ENCODE measurements at regions of chr9 and their contacts with region 1.

Region 1: GRCh38 chr9:94726495-94727191 is at the start of gene AOPEP:
- DNase-seq: peak; percentile 98 to 100 (median 99)
- ATAC-seq: peak; percentile 95
- H3K4me3 ChIP-seq: peak within 1 kb of the TSS; percentile 88 to 92
- H3K4me3 Mint-ChIP-seq: peak within 1 kb of the TSS; percentile 99
- H3K27ac ChIP-seq: peak within 1 kb of the TSS; percentile 95 to 96
- H3K27ac Mint-ChIP-seq: peak within 1 kb of the TSS; percentile 98
- H3K4me1 ChIP-seq: peaks cover 6% of the 10 kb centered on the region
- H3K4me1 Mint-ChIP-seq: peaks cover 12% of the 10 kb centered on the region
- H3K27me3 ChIP-seq: no peaks in the 10 kb centered on the region
- H3K27me3 Mint-ChIP-seq: no peaks in the 10 kb centered on the region
- CTCF ChIP-seq: no peak
- total RNA-seq, gene AOPEP: 4.5 to 5.2 TPM

Region 2: DNA sequence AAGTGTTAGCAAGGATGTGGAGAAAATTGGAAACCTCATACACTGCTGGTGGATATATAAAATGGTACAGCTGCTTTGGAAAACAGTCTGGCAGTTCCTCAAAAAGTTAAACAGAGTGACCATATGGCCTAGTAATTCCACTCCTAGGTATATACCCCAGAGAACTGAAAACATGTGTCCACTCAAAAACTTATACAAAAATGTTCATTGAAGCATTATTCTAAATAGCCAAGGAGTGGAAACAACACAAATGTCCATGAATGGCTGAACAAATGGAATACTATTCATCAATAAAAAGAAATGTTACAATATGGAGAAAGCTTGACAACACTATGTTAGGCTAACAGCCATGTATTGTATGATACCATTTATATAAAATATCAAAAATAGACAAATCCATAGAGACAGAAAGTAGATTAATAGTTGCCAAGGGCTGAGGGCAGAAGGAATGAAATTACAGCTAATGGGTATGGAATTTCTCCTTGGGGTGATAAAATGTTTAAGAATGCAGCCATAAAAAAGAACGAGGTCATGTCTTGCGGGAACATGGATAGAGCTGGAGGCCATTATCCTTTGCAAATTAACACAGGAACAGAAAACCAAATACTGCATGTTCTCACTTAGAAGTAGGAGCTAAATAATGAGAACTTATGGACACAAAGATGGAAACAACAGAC is 53.7 kb before region 1 on chr9:
- CTCF ChIA-PET with region 1: interaction called, 3 read pairs
- POLR2A ChIA-PET with region 1: interaction called, 3 read pairs
- intact Hi-C with region 1: loop called in 1 of 2 experiments (anchors 1 kb)
- DNase-seq: no peak
- ATAC-seq: no peak
- H3K4me3 ChIP-seq: no peak overlapping the region
- H3K4me3 Mint-ChIP-seq: no peak overlapping the region
- H3K27ac ChIP-seq: no peak overlapping the region
- H3K27ac Mint-ChIP-seq: no peak overlapping the region
- H3K4me1 ChIP-seq: no peaks in the 10 kb centered on the region
- H3K4me1 Mint-ChIP-seq: peaks cover 2% of the 10 kb centered on the region
- H3K27me3 ChIP-seq: no peaks in the 10 kb centered on the region
- H3K27me3 Mint-ChIP-seq: peaks cover 5% of the 10 kb centered on the region
- CTCF ChIP-seq: no peak

Region 3: GRCh38 chr9:94870793-94871558 is 144.3 kb after region 1 on chr9:
- CTCF ChIA-PET with region 1: no interaction called
- POLR2A ChIA-PET with region 1: no interaction called
- intact Hi-C with region 1: loop called in 1 of 2 experiments (anchors 2 kb)
- DNase-seq: peak in 7 of 9 experiments; percentile 11 to 93 (median 47)
- ATAC-seq: peak; percentile 88
- H3K4me3 ChIP-seq: peak overlapping the region in 1 of 2 experiments; percentile 7
- H3K4me3 Mint-ChIP-seq: peak overlapping the region; percentile 59
- H3K27ac ChIP-seq: peak overlapping the region; percentile 26 to 55
- H3K27ac Mint-ChIP-seq: peak overlapping the region; percentile 94
- H3K4me1 ChIP-seq: peaks cover 26% of the 10 kb centered on the region
- H3K4me1 Mint-ChIP-seq: peaks cover 31% of the 10 kb centered on the region
- H3K27me3 ChIP-seq: no peaks in the 10 kb centered on the region
- H3K27me3 Mint-ChIP-seq: no peaks in the 10 kb centered on the region
- CTCF ChIP-seq: no peak

Region 4: DNA sequence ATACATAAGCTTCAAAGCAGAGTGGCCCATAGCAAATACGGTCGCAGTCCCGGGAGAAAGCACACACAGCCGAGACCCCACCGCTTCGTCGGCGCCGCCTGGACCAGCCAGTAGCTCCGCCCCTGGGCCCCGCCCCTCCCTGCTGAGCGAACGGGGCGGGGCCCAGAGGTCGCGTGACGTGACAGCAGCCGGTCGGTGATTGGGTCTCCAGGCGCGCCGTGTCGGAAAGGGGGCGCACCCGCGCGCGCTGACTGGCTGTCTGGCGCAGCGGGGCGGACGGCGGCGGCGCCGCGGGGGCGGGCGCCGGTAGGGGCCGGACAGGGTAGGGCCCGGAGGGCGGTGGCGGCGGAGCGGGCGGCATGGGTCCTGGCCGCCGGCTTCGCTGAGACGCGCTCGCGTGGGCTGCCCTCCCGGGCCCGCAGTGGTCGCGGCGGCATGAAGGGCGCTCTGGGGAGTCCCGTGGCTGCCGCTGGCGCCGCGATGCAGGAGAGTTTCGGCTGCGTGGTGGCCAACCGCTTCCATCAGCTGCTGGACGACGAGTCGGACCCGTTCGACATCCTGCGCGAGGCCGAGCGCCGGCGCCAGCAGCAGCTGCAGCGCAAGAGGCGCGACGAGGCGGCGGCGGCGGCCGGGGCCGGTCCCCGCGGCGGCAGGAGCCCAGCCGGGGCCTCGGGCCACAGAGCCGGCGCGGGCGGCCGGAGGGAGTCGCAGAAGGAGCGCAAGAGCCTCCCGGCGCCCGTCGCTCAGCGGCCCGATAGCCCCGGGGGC is 1723.4 kb after region 1 on chr9 and contains the start of gene HABP4:
- CTCF ChIA-PET with region 1: no interaction called
- POLR2A ChIA-PET with region 1: no interaction called
- intact Hi-C with region 1: loop called in 1 of 2 experiments (anchors 10 kb)
- DNase-seq: peak; percentile 89 to 97 (median 96)
- ATAC-seq: peak; percentile 93
- H3K4me3 ChIP-seq: peak within 1 kb of the TSS; percentile 62 to 65
- H3K4me3 Mint-ChIP-seq: peak within 1 kb of the TSS; percentile 95
- H3K27ac ChIP-seq: peak within 1 kb of the TSS; percentile 16 to 59
- H3K27ac Mint-ChIP-seq: peak within 1 kb of the TSS; percentile 94
- H3K4me1 ChIP-seq: peaks cover 12% of the 10 kb centered on the region
- H3K4me1 Mint-ChIP-seq: peaks cover 24% of the 10 kb centered on the region
- H3K27me3 ChIP-seq: no peaks in the 10 kb centered on the region
- H3K27me3 Mint-ChIP-seq: no peaks in the 10 kb centered on the region
- CTCF ChIP-seq: no peak
- total RNA-seq, gene HABP4: 31.9 to 32.6 TPM

Measured in CD8-positive, alpha-beta T cell (primary cell).